Panc1 (cell line): ENCODE measurements at regions of chr18 and their contacts with region 1.

Region 1: GRCh38 chr18:70698574-70698973 is 409.7 kb downstream of the SOCS6 start:
- DNase-seq: no peak
- ATAC-seq: no peak
- H3K4me3 ChIP-seq: no peak overlapping the region
- H3K27ac ChIP-seq: no peak overlapping the region
- H3K4me1 ChIP-seq: no peaks in the 10 kb centered on the region
- H3K27me3 ChIP-seq: no peaks in the 10 kb centered on the region
- CTCF ChIP-seq: no peak

Region 2: DNA sequence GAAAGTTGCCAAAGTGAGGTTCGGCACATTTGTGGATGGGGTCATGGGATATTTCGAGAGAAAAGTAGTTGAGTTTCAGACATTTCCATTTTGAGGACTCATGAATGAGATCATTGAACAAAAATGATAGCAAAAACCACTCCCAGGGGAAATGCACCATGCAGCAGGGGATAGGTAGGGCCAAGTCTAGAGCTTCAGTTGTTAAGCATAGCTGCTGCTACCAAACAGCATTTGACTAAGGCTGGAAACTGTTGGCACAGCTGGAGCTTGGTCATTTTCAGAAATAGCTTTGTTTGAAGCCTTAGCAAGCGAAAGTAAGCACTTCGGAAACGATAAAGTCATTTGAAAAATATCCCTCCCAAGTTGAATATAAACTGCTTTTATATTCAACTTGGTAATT is 22.0 kb after region 1 on chr18:
- CTCF ChIA-PET with region 1: no interaction called
- POLR2A ChIA-PET with region 1: interaction called, 11 read pairs
- in situ Hi-C with region 1: no loop called
- intact Hi-C with region 1: no loop called
- DNase-seq: no peak
- ATAC-seq: no peak
- H3K4me3 ChIP-seq: no peak overlapping the region
- H3K27ac ChIP-seq: no peak overlapping the region
- H3K4me1 ChIP-seq: no peaks in the 10 kb centered on the region
- H3K27me3 ChIP-seq: no peaks in the 10 kb centered on the region
- CTCF ChIP-seq: no peak